Calu3 (cell line): ENCODE measurements at regions of chr5 and their contacts with region 1.

Region 1: GRCh38 chr5:55232985-55233928 is at the start of gene CCNO:
- DNase-seq: peak; percentile 88
- H3K4me3 Mint-ChIP-seq: peak within 1 kb of the TSS; percentile 93
- H3K27ac Mint-ChIP-seq: peak within 1 kb of the TSS; percentile 88
- H3K4me1 Mint-ChIP-seq: peaks cover 11% of the 10 kb centered on the region
- H3K27me3 Mint-ChIP-seq: no peaks in the 10 kb centered on the region
- CTCF ChIP-seq: no peak
- total RNA-seq, gene CCNO: 10.1 and 12.5 TPM in 2 replicates

Region 2: GRCh38 chr5:54835647-54836046 is 397.6 kb before region 1 on chr5:
- CTCF ChIA-PET with region 1: no interaction called
- intact Hi-C with region 1: no loop called
- DNase-seq: no peak
- H3K4me3 Mint-ChIP-seq: no peak overlapping the region
- H3K27ac Mint-ChIP-seq: peak overlapping the region; percentile 27
- H3K4me1 Mint-ChIP-seq: peaks cover 41% of the 10 kb centered on the region
- H3K27me3 Mint-ChIP-seq: no peaks in the 10 kb centered on the region
- CTCF ChIP-seq: no peak

Region 3: DNA sequence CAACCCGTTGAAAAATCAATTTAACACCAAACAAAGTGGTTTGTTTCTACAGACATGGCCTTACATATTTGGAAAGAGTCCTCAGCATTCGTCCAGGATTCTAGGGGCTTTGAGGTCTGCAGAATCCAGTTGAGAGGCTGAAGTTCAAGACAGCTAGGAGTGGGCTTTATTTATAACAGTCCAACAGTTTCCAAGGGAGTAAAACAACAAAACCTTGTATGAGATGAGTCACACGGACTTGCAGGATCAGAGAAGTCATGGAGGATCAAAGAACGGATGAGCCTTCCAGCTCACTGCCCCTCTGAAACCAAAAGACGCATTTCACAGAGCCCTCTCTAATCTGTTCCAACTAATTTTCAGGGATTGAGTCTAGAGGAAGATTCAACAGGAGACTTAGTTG is 236.8 kb before region 1 on chr5:
- CTCF ChIA-PET with region 1: no interaction called
- intact Hi-C with region 1: no loop called
- DNase-seq: no peak
- H3K4me3 Mint-ChIP-seq: no peak overlapping the region
- H3K27ac Mint-ChIP-seq: no peak overlapping the region
- H3K4me1 Mint-ChIP-seq: no peaks in the 10 kb centered on the region
- H3K27me3 Mint-ChIP-seq: peaks cover 88% of the 10 kb centered on the region
- CTCF ChIP-seq: no peak

Region 4: GRCh38 chr5:55072666-55073065 is 160.6 kb before region 1 on chr5:
- CTCF ChIA-PET with region 1: no interaction called
- intact Hi-C with region 1: no loop called
- DNase-seq: no peak
- H3K4me3 Mint-ChIP-seq: no peak overlapping the region
- H3K27ac Mint-ChIP-seq: no peak overlapping the region
- H3K4me1 Mint-ChIP-seq: no peaks in the 10 kb centered on the region
- H3K27me3 Mint-ChIP-seq: peaks cover 50% of the 10 kb centered on the region
- CTCF ChIP-seq: no peak

Region 5: GRCh38 chr5:55187370-55187769 is 45.9 kb before region 1 on chr5:
- CTCF ChIA-PET with region 1: interaction called, 6 read pairs
- intact Hi-C with region 1: loop called (anchors 5 kb)
- DNase-seq: peak; percentile 11
- H3K4me3 Mint-ChIP-seq: no peak overlapping the region
- H3K27ac Mint-ChIP-seq: no peak overlapping the region
- H3K4me1 Mint-ChIP-seq: no peaks in the 10 kb centered on the region
- H3K27me3 Mint-ChIP-seq: peaks cover 24% of the 10 kb centered on the region
- CTCF ChIP-seq: no peak

Region 6: DNA sequence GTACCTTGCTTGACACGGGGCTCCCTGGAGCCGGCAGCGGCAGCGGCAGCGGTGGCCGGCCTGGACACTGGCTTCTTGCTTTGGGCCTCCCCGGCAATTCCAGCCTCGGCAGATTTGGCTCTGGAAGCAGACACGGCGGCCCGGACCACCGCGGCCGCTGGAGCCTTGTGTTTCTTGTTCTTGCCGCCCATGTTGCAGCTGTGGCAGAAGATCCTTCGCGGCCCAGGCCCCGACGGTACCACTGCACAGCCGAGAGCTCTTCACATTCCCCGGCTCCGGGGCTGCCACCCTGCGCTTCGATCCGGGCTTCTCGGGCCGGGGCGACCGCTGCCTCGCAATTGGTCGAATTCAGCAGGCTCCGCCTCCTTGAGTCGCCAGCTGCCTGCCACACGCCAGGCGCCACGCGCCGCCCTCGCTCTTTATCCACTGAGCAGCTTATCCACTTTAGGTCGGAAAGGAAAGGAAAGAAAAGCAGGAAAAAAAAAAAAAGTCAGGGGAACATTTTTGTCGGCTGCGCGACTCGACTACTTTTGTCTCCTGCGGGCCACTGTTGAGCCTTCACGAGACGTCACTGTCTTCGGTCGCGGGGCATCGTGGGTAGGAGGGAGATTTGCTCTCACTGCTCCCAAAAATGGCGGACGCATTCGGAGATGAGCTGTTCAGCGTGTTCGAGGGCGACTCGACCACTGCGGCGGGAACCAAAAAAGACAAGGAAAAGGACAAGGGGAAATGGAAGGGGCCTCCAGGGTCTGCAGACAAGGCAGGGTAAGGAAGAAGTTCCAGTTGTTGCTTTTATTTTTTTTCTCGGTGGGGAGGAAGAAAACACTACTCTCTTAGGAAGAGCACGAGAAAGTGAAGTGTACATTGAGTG is 74.4 kb after region 1 on chr5 and contains the starts of genes DHX29 and MTREX:
- CTCF ChIA-PET with region 1: interaction called, 3 read pairs
- intact Hi-C with region 1: loop called (anchors 5 kb)
- DNase-seq: peak; percentile 90
- H3K4me3 Mint-ChIP-seq: no peak within 1 kb of the TSS
- H3K27ac Mint-ChIP-seq: no peak within 1 kb of the TSS
- H3K4me1 Mint-ChIP-seq: peaks cover 22% of the 10 kb centered on the region
- H3K27me3 Mint-ChIP-seq: no peaks in the 10 kb centered on the region
- CTCF ChIP-seq: no peak
- total RNA-seq, gene DHX29: 17.2 and 20.1 TPM in 2 replicates
- total RNA-seq, gene MTREX: 73.9 and 79.0 TPM in 2 replicates

Region 7: GRCh38 chr5:55364537-55365055 is 131.3 kb after region 1 on chr5:
- CTCF ChIA-PET with region 1: no interaction called
- intact Hi-C with region 1: no loop called
- DNase-seq: no peak
- H3K4me3 Mint-ChIP-seq: peak overlapping the region; percentile 42
- H3K27ac Mint-ChIP-seq: peak overlapping the region; percentile 32
- H3K4me1 Mint-ChIP-seq: peaks cover 23% of the 10 kb centered on the region
- H3K27me3 Mint-ChIP-seq: no peaks in the 10 kb centered on the region
- CTCF ChIP-seq: no peak